PC-3 (cell line): ENCODE measurements at regions of chr11 and their contacts with region 1.

Region 1: DNA sequence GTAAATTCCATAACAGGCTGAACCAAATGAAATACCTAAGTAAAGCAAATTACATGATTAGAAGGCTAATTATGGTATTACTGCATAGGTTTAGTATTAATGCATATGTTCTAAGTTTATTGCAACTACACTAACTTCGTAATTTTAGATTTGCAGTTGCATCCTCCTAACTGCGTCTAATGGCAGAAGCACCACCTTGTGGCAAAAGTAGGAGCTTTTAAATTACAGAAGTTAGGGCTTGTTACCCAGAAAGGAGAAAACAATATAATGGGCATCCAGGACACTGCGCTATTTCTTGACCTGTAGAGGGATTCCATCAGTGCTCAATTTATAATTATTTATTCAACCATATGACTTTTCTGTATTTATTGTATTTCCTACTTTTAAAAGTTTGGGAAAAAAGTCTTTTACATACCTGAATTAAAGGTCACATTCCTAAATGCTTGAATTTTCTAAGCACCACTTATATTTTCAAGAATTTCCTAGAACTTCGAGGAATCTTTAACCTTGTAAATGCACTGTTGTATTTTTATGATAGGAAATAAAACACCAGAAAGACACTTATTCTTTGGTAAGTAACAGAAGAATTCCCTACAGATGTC is 16.3 kb upstream of the GPR83 start:
- DNase-seq: peak; percentile 71
- ATAC-seq: peak; percentile 73
- H3K4me3 ChIP-seq: no peak overlapping the region
- H3K27ac ChIP-seq: no peak overlapping the region
- H3K4me1 ChIP-seq: no peaks in the 10 kb centered on the region
- H3K27me3 ChIP-seq: no peaks in the 10 kb centered on the region
- CTCF ChIP-seq: peak; percentile 84

Region 2: DNA sequence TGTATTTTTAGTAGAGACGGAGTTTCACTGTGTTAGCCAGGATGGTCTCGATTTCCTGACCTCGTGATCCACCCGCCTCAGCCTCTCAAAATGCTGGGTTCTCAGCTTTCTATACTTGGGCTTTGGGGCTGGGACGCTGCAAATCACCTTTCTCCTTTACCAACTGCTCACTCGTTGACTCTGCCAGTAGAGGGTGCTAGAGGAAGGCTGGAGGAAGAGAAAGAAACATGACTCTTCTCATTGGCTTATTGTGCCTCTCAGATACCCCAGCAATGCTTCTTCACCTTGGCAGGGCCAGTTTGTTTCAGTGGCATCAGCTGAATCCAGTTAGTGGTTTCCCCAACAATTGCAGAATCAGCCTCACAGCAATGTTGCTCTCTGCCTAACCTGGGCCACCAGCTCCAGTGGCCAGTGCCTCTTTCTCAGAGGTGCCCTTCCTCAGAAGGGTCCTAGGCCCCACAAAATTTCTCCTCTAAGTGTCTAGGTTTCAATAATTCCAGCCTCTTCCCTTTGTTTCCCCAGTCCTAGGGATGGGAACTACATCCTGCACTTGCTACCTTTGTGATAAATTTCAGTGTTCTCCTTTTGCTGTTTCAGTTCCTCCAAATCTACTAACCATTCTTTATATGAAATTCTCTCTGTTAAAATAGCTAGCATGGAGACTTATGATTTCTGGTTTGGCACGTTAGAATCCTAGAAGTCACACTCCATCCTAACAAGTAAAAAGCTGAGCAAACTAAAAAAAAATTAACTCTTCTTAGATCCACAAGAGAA is 495.6 kb before region 1 on chr11:
- CTCF ChIA-PET with region 1: no interaction called
- POLR2A ChIA-PET with region 1: no interaction called
- intact Hi-C with region 1: loop called (anchors 10 kb)
- DNase-seq: peak; percentile 92
- ATAC-seq: peak; percentile 97
- H3K4me3 ChIP-seq: no peak overlapping the region
- H3K27ac ChIP-seq: no peak overlapping the region
- H3K4me1 ChIP-seq: peaks cover 4% of the 10 kb centered on the region; the same call in 1 of the 2 replicates
- H3K27me3 ChIP-seq: no peaks in the 10 kb centered on the region
- CTCF ChIP-seq: peak; percentile 91

Region 3: DNA sequence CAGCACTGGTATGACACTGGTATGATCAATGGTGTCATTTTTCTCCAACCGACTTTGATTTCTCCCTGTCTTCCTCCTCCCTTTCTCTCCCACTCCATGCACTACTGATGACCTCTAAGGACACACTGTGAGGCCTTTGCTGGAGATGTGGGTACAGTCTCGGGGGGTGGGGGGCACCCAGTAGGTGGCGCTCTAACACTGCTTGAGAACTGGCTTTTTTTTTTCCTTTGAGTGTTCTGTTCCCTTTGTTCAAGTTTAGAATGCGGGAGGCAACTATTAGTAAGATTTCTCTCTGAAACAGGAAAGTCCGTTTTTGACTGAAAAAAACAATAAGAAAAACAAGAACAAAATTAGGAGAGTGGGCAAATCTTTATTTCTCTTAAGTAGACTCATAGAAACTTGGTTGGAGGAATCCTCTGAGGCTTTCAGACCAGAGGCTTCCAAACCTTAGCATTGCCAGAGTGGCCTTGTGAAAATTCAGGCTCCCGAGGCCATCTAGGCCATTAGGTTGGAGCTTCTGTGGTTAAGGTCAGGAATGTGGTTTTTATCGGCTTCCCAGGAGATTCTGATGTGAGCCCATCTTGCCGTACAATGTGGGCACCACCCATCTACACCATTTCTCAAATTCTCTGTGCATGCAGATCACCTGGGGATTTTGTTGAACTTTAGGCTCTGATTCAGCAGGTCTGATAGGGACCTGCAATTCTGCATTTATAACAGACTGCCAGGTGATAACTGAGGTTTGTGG is 245.6 kb before region 1 on chr11:
- CTCF ChIA-PET with region 1: no interaction called
- POLR2A ChIA-PET with region 1: no interaction called
- intact Hi-C with region 1: loop called (anchors 1 kb)
- DNase-seq: peak; percentile 60
- ATAC-seq: peak; percentile 73; the same call in 1 of the 2 replicates
- H3K4me3 ChIP-seq: no peak overlapping the region
- H3K27ac ChIP-seq: no peak overlapping the region
- H3K4me1 ChIP-seq: no peaks in the 10 kb centered on the region
- H3K27me3 ChIP-seq: no peaks in the 10 kb centered on the region
- CTCF ChIP-seq: peak; percentile 96

Region 4: DNA sequence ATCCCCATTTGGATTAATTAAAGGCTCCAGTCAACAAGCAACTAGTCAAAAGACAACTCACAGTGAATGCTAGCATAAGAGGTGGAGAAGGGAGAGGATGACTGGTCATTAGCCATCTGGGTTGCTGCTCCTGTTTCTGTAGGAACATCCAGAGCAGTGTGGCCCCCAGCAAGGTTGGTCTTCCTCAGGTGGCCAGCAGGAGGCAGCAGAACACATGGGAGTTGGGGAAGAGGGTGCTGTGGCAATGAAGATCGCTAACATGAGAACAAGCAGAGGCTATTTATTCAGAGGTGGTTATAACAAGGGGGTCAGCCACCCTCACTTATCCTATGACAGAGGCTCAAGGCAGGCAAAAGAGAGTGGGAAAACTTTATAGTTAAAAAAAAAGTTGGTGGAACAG is 91.8 kb before region 1 on chr11:
- CTCF ChIA-PET with region 1: no interaction called
- POLR2A ChIA-PET with region 1: no interaction called
- intact Hi-C with region 1: loop called (anchors 2 kb)
- DNase-seq: peak; percentile 75
- ATAC-seq: peak; percentile 69
- H3K4me3 ChIP-seq: no peak overlapping the region
- H3K27ac ChIP-seq: no peak overlapping the region
- H3K4me1 ChIP-seq: peaks cover 3% of the 10 kb centered on the region
- H3K27me3 ChIP-seq: no peaks in the 10 kb centered on the region
- CTCF ChIP-seq: peak; percentile 78

Region 5: DNA sequence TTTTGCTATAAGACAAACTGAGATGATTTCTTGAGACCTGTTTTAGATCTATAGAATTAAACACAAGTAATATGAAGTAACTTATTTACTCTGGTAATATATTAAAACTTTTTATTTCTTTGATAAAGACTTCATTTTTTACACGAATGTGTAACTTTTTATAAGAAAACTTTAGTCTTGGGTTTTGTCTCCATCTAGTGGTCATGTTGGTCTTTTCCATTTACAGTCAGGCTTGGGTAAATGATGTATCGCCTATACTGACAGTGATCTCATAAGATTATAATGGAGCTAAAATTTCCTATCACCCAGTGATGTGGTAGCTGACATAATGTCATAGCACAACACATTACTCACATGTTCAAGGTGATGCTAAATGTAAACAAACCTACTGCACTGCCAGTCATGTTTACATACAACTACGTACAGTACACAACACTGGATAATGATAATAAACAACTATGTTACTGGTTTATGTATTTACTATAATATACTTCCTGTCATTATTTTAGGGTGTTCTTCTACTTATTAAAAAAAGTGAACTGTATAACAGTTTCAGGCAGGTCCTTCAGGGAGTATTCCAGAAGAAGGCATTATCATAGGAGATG is 87.3 kb after region 1 on chr11:
- CTCF ChIA-PET with region 1: no interaction called
- POLR2A ChIA-PET with region 1: no interaction called
- intact Hi-C with region 1: loop called (anchors 1 kb)
- DNase-seq: peak; percentile 90
- ATAC-seq: peak; percentile 62
- H3K4me3 ChIP-seq: no peak overlapping the region
- H3K27ac ChIP-seq: no peak overlapping the region
- H3K4me1 ChIP-seq: no peaks in the 10 kb centered on the region; the same call in 1 of the 2 replicates
- H3K27me3 ChIP-seq: no peaks in the 10 kb centered on the region
- CTCF ChIP-seq: peak; percentile 86